Sciatic nerve (tissue), 2 donors: ENCODE measurements at regions of chr12 and their contacts with region 1.

Region 1: DNA sequence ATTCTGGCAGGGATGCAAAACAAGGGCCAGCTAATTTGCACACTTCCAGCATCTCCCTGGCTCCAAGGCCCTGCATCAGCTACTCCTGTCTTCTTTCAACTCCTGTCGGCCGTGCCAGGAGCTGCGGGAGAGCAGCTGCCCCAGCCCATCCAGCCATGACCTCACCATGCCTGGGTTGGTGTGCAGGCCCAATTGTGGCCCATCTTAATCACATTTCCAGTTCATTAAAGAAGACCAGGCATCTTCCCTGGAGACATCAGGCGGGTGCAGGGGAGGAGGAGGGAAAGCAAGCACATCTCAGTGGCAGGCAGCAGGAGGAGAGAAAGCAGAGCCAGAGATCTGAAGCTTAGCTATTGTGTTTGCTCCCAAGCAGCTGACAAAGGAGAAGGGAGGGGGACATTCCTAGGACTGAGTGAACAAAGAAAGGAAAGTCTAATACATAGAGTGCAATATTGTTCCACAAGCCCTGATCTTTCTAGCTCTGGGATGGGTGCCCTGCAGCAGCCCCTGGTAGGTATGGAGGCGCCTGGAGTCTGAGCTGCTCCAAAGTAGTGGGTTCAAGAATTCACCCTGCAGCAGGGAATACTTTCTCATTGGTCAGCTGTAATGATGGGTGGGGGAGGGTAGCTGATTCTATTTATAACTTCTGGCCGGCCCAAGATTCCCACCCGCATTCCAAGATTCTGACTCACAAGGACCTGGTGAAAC is 40.1 kb downstream of the VWF start:
- DNase-seq: peak; percentile 58
- ATAC-seq: peak; percentile 62

Region 2: GRCh38 chr12:5694759-5695409 is 389.5 kb before region 1 on chr12:
- intact Hi-C with region 1: no loop called
- DNase-seq: no peak
- ATAC-seq: no peak

Region 3: GRCh38 chr12:5861416-5861815 is 223.0 kb before region 1 on chr12:
- intact Hi-C with region 1: no loop called
- DNase-seq: no peak
- ATAC-seq: peak; percentile 74

Region 4: DNA sequence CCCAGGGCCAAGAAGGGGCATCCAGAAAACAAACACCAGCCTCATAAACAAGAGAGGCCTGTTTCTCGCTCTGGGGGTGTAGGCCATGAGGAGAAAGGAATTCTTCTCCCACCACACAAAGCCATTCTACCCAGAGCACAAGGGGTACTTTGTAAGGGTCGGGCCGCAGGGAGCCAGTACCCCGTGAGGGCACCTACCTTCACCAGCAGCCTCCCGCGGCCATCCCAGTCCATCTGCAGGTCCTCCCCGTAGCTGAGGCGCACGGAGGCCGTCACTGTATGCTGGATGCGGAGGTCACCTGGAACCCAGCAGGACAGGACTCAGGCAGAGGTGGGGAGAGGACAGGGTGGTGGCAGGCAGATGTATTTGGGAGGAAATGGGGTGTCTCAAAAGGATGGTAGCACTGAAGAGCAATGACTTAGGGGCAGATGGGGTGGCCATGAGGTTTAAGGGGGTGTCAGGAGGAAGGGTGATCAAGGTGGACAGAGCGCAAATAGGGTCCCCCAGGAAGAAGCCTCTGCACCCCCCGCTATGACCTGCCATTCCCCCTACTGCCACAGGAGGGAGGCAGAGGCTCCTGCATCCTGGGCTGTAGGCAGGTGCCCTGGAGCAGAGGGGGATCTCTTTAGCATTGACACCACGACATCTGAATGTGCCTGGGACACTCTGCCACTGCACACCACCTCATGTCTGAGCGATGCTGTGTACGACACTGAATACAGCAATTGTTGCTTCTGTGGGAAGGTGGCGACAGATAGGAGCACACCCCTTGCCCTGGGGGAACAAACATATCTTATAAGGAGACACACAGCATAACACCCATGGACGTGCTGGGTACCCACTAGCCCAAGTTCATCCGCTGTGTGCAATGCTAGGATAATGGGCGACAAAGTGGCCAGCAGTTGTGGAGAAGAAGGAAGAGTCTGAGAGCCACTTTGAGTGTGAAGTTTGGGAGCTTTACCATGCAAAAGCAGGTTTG is 21.4 kb before region 1 on chr12:
- intact Hi-C with region 1: no loop called
- DNase-seq: no peak
- ATAC-seq: peak; percentile 72

Region 5: DNA sequence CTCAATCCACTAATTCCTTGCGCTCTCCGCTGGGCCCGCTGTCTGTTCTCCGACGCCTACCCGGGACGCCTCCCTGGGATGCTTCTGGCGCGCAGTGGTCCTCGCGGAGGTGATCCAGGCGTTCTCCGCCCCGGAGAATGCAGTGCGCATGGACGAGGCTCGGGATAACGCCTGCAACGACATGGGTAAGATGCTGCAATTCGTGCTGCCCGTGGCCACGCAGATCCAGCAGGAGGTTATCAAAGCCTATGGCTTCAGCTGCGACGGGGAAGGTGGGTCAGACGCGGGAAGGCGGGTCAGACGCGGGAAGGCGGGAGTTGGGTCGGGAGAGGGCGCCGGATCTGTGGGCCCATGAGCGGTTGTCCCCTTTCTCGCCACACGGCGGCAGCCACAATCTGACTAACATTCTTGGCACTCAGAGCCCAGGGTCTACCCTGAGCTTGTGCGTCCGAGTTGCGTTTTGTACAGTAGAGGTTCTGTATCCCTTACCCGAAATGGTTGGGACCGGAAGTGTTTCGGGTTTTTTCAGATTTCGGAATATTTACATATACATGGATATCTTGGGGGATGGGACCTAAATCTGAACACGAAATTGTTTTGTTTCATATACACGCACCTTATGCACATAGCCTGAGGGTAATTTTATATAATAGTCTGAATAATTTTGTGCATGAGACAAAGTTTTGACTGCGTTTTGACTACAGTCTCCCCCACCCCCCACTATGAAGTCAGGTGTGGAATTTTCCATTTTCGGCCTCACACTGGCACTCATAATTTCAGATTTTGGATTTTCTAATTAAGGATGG is 860.2 kb after region 1 on chr12:
- intact Hi-C with region 1: loop called (anchors 5 kb)
- DNase-seq: peak; percentile 96
- ATAC-seq: peak; percentile 85